K562 (cell line): ENCODE measurements at regions of chr15 and their contacts with region 1.

Region 1: GRCh38 chr15:55290528-55291057 is 980 bp upstream of the RAB27A start:
- DNase-seq: peak; percentile 71 to 91 (median 77)
- ATAC-seq: peak; percentile 76
- H3K4me3 ChIP-seq: peak overlapping the region; percentile 88
- H3K27ac ChIP-seq: peak overlapping the region; percentile 94
- H3K4me1 ChIP-seq: peaks cover 18 to 22% of the 10 kb centered on the region in 2 experiments
- H3K27me3 ChIP-seq: no peaks in the 10 kb centered on the region
- CTCF ChIP-seq: peak; percentile 85 to 94 (median 92)
- EP300 ChIP-seq: 0 out of 2 replicates have a peak, but pooled peaks have one; percentile 10
- POLR2A ChIP-seq: no peak
- RAD21 ChIP-seq: peak; percentile 94 to 95

Region 2: GRCh38 chr15:55031727-55032126 is 258.9 kb before region 1 on chr15:
- CTCF ChIA-PET with region 1: no interaction called
- POLR2A ChIA-PET with region 1: no interaction called
- in situ Hi-C with region 1: no loop called
- intact Hi-C with region 1: loop called (anchors 10 kb)
- DNase-seq: no peak
- ATAC-seq: no peak
- H3K4me3 ChIP-seq: no peak overlapping the region
- H3K27ac ChIP-seq: no peak overlapping the region
- H3K4me1 ChIP-seq: no peaks in the 10 kb centered on the region
- H3K27me3 ChIP-seq: no peaks in the 10 kb centered on the region
- CTCF ChIP-seq: no peak
- EP300 ChIP-seq: no peak
- POLR2A ChIP-seq: no peak
- RAD21 ChIP-seq: no peak

Region 3: GRCh38 chr15:55186331-55186730 is 104.3 kb before region 1 on chr15:
- CTCF ChIA-PET with region 1: no interaction called
- POLR2A ChIA-PET with region 1: no interaction called
- in situ Hi-C with region 1: no loop called
- intact Hi-C with region 1: no loop called
- DNase-seq: no peak
- ATAC-seq: no peak
- H3K4me3 ChIP-seq: no peak overlapping the region
- H3K27ac ChIP-seq: no peak overlapping the region
- H3K4me1 ChIP-seq: no peaks in the 10 kb centered on the region
- H3K27me3 ChIP-seq: no peaks in the 10 kb centered on the region
- CTCF ChIP-seq: no peak
- EP300 ChIP-seq: no peak
- POLR2A ChIP-seq: no peak
- RAD21 ChIP-seq: no peak

Region 4: GRCh38 chr15:55196458-55197361 is 93.9 kb before region 1 on chr15 and contains the start of gene RSL24D1:
- CTCF ChIA-PET with region 1: interaction called, 6 read pairs
- POLR2A ChIA-PET with region 1: no interaction called
- in situ Hi-C with region 1: no loop called
- intact Hi-C with region 1: loop called (anchors 5 kb)
- DNase-seq: peak; percentile 84 to 99 (median 88)
- ATAC-seq: peak; percentile 96
- H3K4me3 ChIP-seq: peak within 1 kb of the TSS; percentile 90
- H3K27ac ChIP-seq: peak within 1 kb of the TSS; percentile 94
- H3K4me1 ChIP-seq: peaks cover 3 to 20% of the 10 kb centered on the region in 2 experiments; a peak in 3 of 5 replicates
- H3K27me3 ChIP-seq: no peaks in the 10 kb centered on the region
- CTCF ChIP-seq: peak; percentile 59 to 68 (median 62)
- EP300 ChIP-seq: peak; percentile 48; the same call in 1 of the 2 replicates
- POLR2A ChIP-seq: peak; percentile 94
- RAD21 ChIP-seq: peak; percentile 17 to 41; a peak in 3 of 4 replicates
- polyA plus RNA-seq, gene RSL24D1: 272 to 324 TPM

Region 5: DNA sequence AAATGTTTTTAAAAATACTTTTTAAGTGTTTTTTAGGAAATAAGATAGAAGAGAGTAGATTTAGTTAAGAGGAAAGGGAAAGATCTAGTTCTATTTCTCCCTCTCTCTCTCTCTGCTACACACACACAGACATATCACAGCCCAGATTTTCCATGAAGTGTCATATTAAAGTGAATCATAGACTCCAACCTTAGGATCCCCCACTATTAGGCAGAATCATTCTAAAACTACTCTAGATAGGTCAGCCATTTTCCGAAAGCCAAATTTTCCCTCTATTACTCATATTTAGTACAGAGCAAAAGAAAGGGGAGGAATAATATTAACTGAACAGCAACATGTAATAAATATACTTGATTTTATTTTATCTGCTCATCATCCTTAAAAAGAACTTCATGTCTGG is 48.7 kb before region 1 on chr15:
- CTCF ChIA-PET with region 1: no interaction called
- POLR2A ChIA-PET with region 1: no interaction called
- in situ Hi-C with region 1: no loop called
- intact Hi-C with region 1: loop called (anchors 1 kb)
- DNase-seq: no peak
- ATAC-seq: no peak
- H3K4me3 ChIP-seq: no peak overlapping the region
- H3K27ac ChIP-seq: no peak overlapping the region; the same call in 2 of the 3 replicates
- H3K4me1 ChIP-seq: peaks cover 0 to 43% of the 10 kb centered on the region in 2 experiments; a peak in 3 of 5 replicates
- H3K27me3 ChIP-seq: no peaks in the 10 kb centered on the region
- CTCF ChIP-seq: no peak
- EP300 ChIP-seq: no peak
- POLR2A ChIP-seq: no peak
- RAD21 ChIP-seq: no peak

Region 6: DNA sequence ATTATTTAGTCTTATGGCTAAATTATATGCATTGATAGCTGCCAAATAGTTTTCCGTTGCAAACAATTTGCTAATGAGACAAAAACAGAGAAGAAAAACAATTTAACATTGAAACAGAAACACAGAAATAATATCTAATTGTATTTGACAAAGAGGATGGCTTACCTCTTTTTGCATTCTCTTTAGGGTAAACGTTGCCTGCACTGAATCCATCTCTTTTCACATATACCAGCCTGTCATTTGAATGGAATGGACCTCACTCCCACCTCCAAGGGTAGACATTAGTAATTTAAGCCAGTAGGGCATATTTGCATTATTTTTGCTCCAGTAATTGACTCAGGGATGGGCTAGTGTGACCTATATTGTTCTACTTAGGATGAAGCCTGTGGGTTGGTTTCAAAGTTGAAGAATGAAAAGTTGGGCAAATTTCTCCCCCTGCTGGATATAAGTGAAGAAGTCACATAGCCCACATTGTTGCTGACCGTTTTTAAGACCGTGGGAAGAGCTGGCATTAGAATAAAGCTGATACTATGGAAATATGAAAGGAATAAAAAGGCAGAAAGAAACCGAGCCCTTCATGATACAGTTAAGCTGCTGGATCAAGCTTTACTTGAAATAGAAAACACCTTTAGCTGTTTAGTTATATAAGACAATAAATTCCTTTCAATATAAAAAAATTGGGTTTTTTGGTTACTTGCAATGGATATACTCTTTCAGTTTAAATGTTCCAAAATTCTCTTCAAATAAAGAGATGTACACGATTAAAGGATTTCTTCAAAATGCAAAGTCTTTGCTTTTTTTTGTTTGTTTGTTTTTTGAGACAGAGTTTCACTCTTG is 144.6 kb after region 1 on chr15:
- CTCF ChIA-PET with region 1: interaction called, 3 read pairs
- POLR2A ChIA-PET with region 1: no interaction called
- in situ Hi-C with region 1: no loop called
- intact Hi-C with region 1: loop called (anchors 1 kb)
- DNase-seq: peak; percentile 33 to 76 (median 48)
- ATAC-seq: peak; percentile 96
- H3K4me3 ChIP-seq: no peak overlapping the region
- H3K27ac ChIP-seq: no peak overlapping the region
- H3K4me1 ChIP-seq: no peaks in the 10 kb centered on the region; a peak in 1 of 5 replicates
- H3K27me3 ChIP-seq: no peaks in the 10 kb centered on the region
- CTCF ChIP-seq: peak; percentile 55 to 77 (median 69); a peak in 5 of 6 replicates
- EP300 ChIP-seq: no peak
- POLR2A ChIP-seq: no peak
- RAD21 ChIP-seq: peak; percentile 75 to 85

Region 7: DNA sequence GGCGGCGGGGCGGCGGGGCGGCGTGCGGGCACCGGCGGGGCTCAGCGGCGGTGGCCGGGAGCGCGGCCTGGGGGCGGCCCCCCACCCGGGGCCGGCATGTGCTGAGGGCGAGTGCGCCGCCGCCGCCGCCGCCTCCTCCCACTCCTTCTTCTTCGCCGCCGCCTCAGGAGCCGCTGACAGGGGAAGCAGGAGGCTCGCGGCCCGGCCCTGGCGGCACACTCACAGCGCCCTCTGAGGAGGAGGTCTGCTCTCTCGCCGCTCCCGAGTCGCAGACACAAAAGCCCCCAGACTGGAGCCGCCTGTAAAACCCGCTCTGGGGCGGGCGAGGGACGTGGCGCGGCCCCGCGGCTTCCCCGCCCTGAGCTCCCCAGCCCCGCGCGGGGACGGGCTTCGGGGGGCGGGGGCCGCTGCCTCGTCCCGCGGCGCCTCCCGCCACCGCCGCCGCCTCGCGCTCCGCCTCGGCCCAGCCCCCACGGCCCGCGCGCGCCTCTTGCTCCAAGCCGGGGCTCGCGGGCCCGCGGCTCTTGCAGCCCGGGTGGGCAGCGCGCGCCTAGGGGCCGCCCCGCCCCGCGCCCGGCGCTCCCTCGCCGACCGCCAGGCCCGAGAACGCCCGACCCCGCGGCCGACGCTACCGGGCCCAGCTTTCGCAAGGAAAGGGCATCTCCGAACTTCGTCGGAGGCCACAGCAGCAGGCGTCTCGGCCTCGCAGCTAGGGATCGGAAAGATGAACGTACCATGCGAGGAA is 297.6 kb after region 1 on chr15 and contains the start of gene PYGO1:
- CTCF ChIA-PET with region 1: no interaction called
- POLR2A ChIA-PET with region 1: no interaction called
- in situ Hi-C with region 1: no loop called
- intact Hi-C with region 1: no loop called
- DNase-seq: peak; percentile 29 to 40 (median 37)
- ATAC-seq: peak; percentile 75
- H3K4me3 ChIP-seq: peak within 1 kb of the TSS; percentile 33
- H3K27ac ChIP-seq: no peak within 1 kb of the TSS
- H3K4me1 ChIP-seq: peaks cover 0 to 9% of the 10 kb centered on the region in 2 experiments; a peak in 2 of 5 replicates
- H3K27me3 ChIP-seq: peaks cover 12% of the 10 kb centered on the region in 2 experiments; a peak in 4 of 5 replicates
- CTCF ChIP-seq: no peak
- EP300 ChIP-seq: no peak
- POLR2A ChIP-seq: no peak
- RAD21 ChIP-seq: no peak
- polyA plus RNA-seq, gene PYGO1: under 0.01 TPM in 1 of 2 experiments, not detected in the other